Activated CD8-positive, alpha-beta T cell treated with anti-CD3 and anti-CD28 coated beads for 36 hours (primary cell): ENCODE measurements at regions of chr2 and their contacts with region 1.

Region 1: GRCh38 chr2:9423100-9423921 is at the starts of genes CPSF3 and ITGB1BP1:
- DNase-seq: peak; percentile 97
- ATAC-seq: peak; percentile 92
- H3K4me3 Mint-ChIP-seq: no peak within 1 kb of the TSS
- H3K27ac Mint-ChIP-seq: peak within 1 kb of the TSS; percentile 93
- H3K4me1 Mint-ChIP-seq: peaks cover 31% of the 10 kb centered on the region
- H3K27me3 Mint-ChIP-seq: no peaks in the 10 kb centered on the region
- CTCF ChIP-seq: no peak
- total RNA-seq, gene CPSF3: 72.2 to 73.0 TPM
- total RNA-seq, gene ITGB1BP1: 111 to 117 TPM

Region 2: GRCh38 chr2:9474361-9474967 is 51.2 kb after region 1 on chr2 and contains the start of gene IAH1:
- CTCF ChIA-PET with region 1: no interaction called
- POLR2A ChIA-PET with region 1: interaction called, 19 read pairs
- intact Hi-C with region 1: no loop called
- DNase-seq: peak; percentile 63
- ATAC-seq: peak; percentile 80
- H3K4me3 Mint-ChIP-seq: peak within 1 kb of the TSS; percentile 82
- H3K27ac Mint-ChIP-seq: peak within 1 kb of the TSS; percentile 83
- H3K4me1 Mint-ChIP-seq: peaks cover 40% of the 10 kb centered on the region
- H3K27me3 Mint-ChIP-seq: no peaks in the 10 kb centered on the region
- CTCF ChIP-seq: no peak
- total RNA-seq, gene IAH1: 64.9 to 67.3 TPM